Common myeloid progenitor, CD34-positive (primary cell): ENCODE measurements at regions of chr2 and their contacts with region 1.

Region 1: GRCh38 chr2:230987137-230988020 is 8.5 kb upstream of the SPATA3 start:
- DNase-seq: peak; percentile 38 to 60 (median 58)
- H3K4me3 ChIP-seq: peak overlapping the region in 6 of 7 experiments; percentile 66 to 79 (median 70)
- H3K27ac ChIP-seq: no peak overlapping the region
- H3K4me1 ChIP-seq: peaks cover 0 to 8% (median 5%) of the 10 kb centered on the region in 4 experiments
- H3K27me3 ChIP-seq: peaks cover 0 to 35% (median 10%) of the 10 kb centered on the region in 5 experiments

Region 2: GRCh38 chr2:230824406-230824978 is 162.9 kb before region 1 on chr2:
- CTCF ChIA-PET with region 1: interaction called, 61 read pairs
- POLR2A ChIA-PET with region 1: no interaction called
- DNase-seq: peak; percentile 88 to 93 (median 89)
- H3K4me3 ChIP-seq: peak overlapping the region in 4 of 7 experiments; percentile 8 to 44 (median 30)
- H3K27ac ChIP-seq: no peak overlapping the region
- H3K4me1 ChIP-seq: peaks cover 0 to 20% (median 12%) of the 10 kb centered on the region in 4 experiments
- H3K27me3 ChIP-seq: peaks cover 0 to 13% (median 4%) of the 10 kb centered on the region in 5 experiments

Region 3: GRCh38 chr2:230842473-230842872 is 144.9 kb before region 1 on chr2:
- CTCF ChIA-PET with region 1: interaction called, 10 read pairs
- POLR2A ChIA-PET with region 1: interaction called, 3 read pairs
- DNase-seq: no peak
- H3K4me3 ChIP-seq: no peak overlapping the region
- H3K27ac ChIP-seq: no peak overlapping the region
- H3K4me1 ChIP-seq: peaks cover 3 to 9% (median 6%) of the 10 kb centered on the region in 4 experiments
- H3K27me3 ChIP-seq: peaks cover 0 to 2% (median 0%) of the 10 kb centered on the region in 5 experiments

Region 4: DNA sequence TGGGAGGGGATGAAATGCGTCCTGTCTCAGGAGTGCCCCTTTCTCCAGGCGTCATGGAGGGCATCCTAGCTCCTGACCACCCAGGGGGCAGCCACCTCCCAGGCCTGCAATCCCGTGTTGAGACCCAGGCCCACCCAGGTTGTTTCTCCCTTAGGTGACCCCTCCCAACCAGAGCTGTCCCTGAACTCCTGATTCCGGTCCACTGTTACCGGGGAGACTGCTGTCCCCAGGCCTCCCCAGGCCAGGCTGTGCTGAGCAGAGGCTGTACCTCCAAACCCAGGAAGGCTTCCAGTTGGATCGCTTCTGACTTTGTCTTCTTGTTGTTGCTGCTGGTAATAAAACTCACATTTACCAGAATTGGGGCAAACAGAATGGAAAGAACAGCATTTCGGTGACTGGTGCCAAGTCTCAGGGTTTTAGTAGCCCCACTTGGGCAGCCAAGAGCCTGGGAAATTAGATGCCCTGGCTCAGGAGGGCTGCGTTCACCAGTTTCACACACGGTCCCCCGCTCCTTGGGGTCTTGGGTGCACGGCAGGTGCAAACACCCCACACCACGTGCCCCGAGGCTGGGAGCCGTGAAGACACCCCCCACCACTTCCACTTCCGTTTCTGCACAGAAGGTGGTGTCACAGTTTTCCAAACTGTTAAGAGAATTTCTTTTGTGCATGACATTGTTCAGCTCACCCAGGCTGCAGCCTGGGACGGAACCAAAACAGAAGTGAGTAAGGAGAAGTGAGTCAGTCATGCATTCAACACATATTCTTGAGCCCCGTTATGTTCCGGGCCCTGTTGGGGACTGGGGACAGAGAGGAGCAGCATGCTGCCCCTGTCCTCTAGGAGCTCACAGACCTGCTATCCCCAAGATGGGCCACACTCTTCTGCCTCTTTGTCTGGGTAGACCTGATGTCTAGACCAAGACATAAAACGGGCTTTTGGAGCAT is 93.3 kb before region 1 on chr2:
- CTCF ChIA-PET with region 1: interaction called, 35 read pairs
- POLR2A ChIA-PET with region 1: no interaction called
- DNase-seq: peak in 2 of 3 donors; percentile 44 to 67
- H3K4me3 ChIP-seq: no peak overlapping the region
- H3K27ac ChIP-seq: no peak overlapping the region
- H3K4me1 ChIP-seq: peaks cover 2 to 33% (median 16%) of the 10 kb centered on the region in 4 experiments
- H3K27me3 ChIP-seq: no peaks in the 10 kb centered on the region

Region 5: GRCh38 chr2:230902180-230902899 is 85.0 kb before region 1 on chr2:
- CTCF ChIA-PET with region 1: interaction called, 35 read pairs
- POLR2A ChIA-PET with region 1: no interaction called
- DNase-seq: peak; percentile 64 to 85 (median 74)
- H3K4me3 ChIP-seq: no peak overlapping the region
- H3K27ac ChIP-seq: no peak overlapping the region
- H3K4me1 ChIP-seq: peaks cover 0 to 4% (median 0%) of the 10 kb centered on the region in 4 experiments
- H3K27me3 ChIP-seq: no peaks in the 10 kb centered on the region

Region 6: GRCh38 chr2:230913406-230914143 is 73.8 kb before region 1 on chr2:
- CTCF ChIA-PET with region 1: interaction called, 38 read pairs
- POLR2A ChIA-PET with region 1: no interaction called
- DNase-seq: peak; percentile 82 to 93 (median 91)
- H3K4me3 ChIP-seq: no peak overlapping the region
- H3K27ac ChIP-seq: no peak overlapping the region
- H3K4me1 ChIP-seq: peaks cover 0 to 18% (median 8%) of the 10 kb centered on the region in 4 experiments
- H3K27me3 ChIP-seq: no peaks in the 10 kb centered on the region

Region 7: GRCh38 chr2:230925879-230926765 is 61.3 kb before region 1 on chr2:
- CTCF ChIA-PET with region 1: interaction called, 11 read pairs
- POLR2A ChIA-PET with region 1: no interaction called
- DNase-seq: peak; percentile 11 to 51 (median 28)
- H3K4me3 ChIP-seq: no peak overlapping the region
- H3K27ac ChIP-seq: no peak overlapping the region
- H3K4me1 ChIP-seq: peaks cover 0 to 18% (median 14%) of the 10 kb centered on the region in 4 experiments
- H3K27me3 ChIP-seq: no peaks in the 10 kb centered on the region

Region 8: DNA sequence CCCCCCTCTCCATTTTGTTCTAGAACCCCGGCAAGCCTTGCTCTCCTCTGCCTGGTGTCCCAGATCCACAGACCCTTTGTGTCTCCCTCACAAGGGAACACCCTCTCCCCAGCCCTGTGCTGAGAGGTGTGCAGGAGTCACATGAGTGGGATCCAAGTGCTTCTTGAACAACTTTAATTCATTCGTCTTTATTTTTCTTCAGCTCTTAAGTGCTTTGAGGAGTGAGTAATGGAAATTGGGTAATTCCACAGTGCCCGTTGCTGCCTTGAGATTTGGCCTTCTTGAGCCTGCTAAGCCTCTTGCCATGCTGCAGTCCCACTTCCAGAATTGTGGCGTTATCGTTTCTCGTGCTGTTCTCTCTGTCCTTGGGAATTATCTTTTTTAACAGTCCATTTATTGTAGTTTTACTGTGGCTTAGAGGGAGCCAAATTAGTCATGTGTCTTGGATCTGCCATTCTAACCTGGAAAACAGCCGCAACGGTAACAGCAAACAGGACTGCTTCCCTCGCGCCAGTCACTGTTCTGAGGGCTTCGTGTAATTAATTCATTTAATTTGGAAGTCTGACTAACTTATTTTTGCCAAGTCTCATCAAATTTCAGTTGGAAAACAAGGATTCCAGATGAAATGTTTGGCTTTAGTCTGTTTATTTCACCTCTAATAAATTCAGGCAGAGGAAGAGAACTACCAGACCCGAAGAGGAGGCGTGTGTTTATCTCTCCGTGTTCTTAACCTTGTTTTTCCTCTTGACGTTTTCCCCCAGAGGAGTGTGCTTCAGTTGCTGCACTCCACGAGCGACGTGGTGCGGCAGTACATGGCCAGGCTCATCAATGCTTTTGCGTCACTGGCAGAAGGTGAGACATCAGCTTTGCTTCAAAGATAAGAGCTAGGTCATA is 283.1 kb after region 1 on chr2:
- CTCF ChIA-PET with region 1: no interaction called
- POLR2A ChIA-PET with region 1: no interaction called
- DNase-seq: no peak
- H3K4me3 ChIP-seq: no peak overlapping the region
- H3K27ac ChIP-seq: no peak overlapping the region
- H3K4me1 ChIP-seq: no peaks in the 10 kb centered on the region
- H3K27me3 ChIP-seq: no peaks in the 10 kb centered on the region